Right ventricle myocardium inferior (tissue), 1 donor: ENCODE measurements at regions of chr6 and their contacts with region 1.

Region 1: DNA sequence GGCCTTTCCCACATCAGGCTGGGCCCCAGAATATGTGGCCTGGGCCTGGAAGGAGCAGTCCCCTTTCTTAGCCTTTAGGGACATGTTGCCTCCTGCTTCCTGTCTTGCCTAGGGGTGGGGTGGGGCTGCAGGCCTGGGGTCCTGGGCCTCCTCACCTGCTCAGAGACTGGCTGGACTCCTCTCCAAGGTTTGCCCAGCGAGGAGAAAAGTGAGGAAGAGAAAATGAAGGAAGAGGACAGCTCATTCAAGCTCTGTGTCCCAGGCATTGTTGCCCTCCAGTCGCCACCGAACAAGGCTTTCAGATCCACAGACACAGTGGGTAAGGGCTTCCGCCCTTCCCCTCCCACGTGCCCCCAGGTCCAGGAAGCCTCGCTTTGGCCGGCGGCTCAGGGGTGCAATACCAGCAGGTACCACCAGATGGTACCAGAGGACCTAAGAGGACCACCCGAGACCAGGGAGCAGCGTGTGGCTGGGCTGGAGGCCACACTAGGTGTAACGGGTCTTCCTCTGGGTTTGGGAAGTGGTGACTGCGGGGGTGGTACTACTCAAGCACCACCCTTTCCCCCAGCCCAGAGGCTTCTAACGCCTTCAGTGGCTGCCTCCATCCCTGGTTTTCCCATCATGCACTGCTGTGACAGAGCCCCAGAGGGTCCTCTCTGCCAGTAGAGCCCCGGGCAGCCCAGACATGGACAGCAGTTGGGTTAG is 5.5 kb upstream of the BAK1 start:
- DNase-seq: peak; percentile 88
- ATAC-seq: peak; percentile 78

Region 2: GRCh38 chr6:33391278-33391921 is 194.2 kb before region 1 on chr6 and contains the start of gene KIFC1:
- intact Hi-C with region 1: no loop called
- DNase-seq: peak; percentile 99
- ATAC-seq: peak; percentile 99
- total RNA-seq, gene KIFC1: 1.3 TPM

Region 3: GRCh38 chr6:33607784-33608161 is 22.2 kb after region 1 on chr6:
- intact Hi-C with region 1: loop called (anchors 2 kb)
- DNase-seq: no peak
- ATAC-seq: no peak

Region 4: GRCh38 chr6:33620856-33621710 is 35.5 kb after region 1 on chr6 and contains the start of gene ITPR3:
- intact Hi-C with region 1: loop called (anchors 5 kb)
- DNase-seq: no peak
- ATAC-seq: peak; percentile 58
- total RNA-seq, gene ITPR3: 8.0 TPM

Region 5: GRCh38 chr6:33672808-33673207 is 87.3 kb after region 1 on chr6:
- intact Hi-C with region 1: loop called (anchors 2 kb)
- DNase-seq: peak; percentile 93
- ATAC-seq: peak; percentile 95

Region 6: GRCh38 chr6:33696548-33697518 is 111.3 kb after region 1 on chr6:
- intact Hi-C with region 1: loop called (anchors 2 kb)
- DNase-seq: no peak
- ATAC-seq: peak; percentile 15

Region 7: GRCh38 chr6:33761922-33762629 is 176.5 kb after region 1 on chr6:
- intact Hi-C with region 1: loop called (anchors 1 kb)
- DNase-seq: peak; percentile 91
- ATAC-seq: peak; percentile 95

Region 8: GRCh38 chr6:34154668-34155447 is 569.3 kb after region 1 on chr6:
- intact Hi-C with region 1: loop called (anchors 5 kb)
- DNase-seq: no peak
- ATAC-seq: peak; percentile 63